ENCODE measurements at regions of chr5 and their contacts with region 1.

Region 1: GRCh38 chr5:91311697-91312501 is 71.2 kb downstream of the ARRDC3 start:
- DNase-seq: peak; percentile 97
- H3K4me3 ChIP-seq: no peak overlapping the region
- H3K27ac ChIP-seq: peak overlapping the region; percentile 100
- H3K4me1 ChIP-seq: peaks cover 33% of the 10 kb centered on the region
- H3K27me3 ChIP-seq: no peaks in the 10 kb centered on the region
- CTCF ChIP-seq: no peak
- POLR2A ChIP-seq: no peak

Region 2: GRCh38 chr5:90968319-90968718 is 343.6 kb before region 1 on chr5:
- CTCF ChIA-PET with region 1: no interaction called
- POLR2A ChIA-PET with region 1: no interaction called
- dilution Hi-C with region 1: no loop called
- intact Hi-C with region 1: loop called (anchors 1 kb)
- DNase-seq: no peak
- H3K4me3 ChIP-seq: no peak overlapping the region
- H3K27ac ChIP-seq: peak overlapping the region; percentile 57
- H3K4me1 ChIP-seq: peaks cover 32% of the 10 kb centered on the region
- H3K27me3 ChIP-seq: no peaks in the 10 kb centered on the region
- CTCF ChIP-seq: no peak
- POLR2A ChIP-seq: no peak

Region 3: GRCh38 chr5:91101600-91102379 is 210.1 kb before region 1 on chr5:
- CTCF ChIA-PET with region 1: no interaction called
- POLR2A ChIA-PET with region 1: no interaction called
- dilution Hi-C with region 1: no loop called
- intact Hi-C with region 1: loop called (anchors 1 kb)
- DNase-seq: peak; percentile 85
- H3K4me3 ChIP-seq: no peak overlapping the region
- H3K27ac ChIP-seq: no peak overlapping the region
- H3K4me1 ChIP-seq: no peaks in the 10 kb centered on the region
- H3K27me3 ChIP-seq: no peaks in the 10 kb centered on the region
- CTCF ChIP-seq: peak; percentile 67 to 70
- POLR2A ChIP-seq: no peak

Region 4: DNA sequence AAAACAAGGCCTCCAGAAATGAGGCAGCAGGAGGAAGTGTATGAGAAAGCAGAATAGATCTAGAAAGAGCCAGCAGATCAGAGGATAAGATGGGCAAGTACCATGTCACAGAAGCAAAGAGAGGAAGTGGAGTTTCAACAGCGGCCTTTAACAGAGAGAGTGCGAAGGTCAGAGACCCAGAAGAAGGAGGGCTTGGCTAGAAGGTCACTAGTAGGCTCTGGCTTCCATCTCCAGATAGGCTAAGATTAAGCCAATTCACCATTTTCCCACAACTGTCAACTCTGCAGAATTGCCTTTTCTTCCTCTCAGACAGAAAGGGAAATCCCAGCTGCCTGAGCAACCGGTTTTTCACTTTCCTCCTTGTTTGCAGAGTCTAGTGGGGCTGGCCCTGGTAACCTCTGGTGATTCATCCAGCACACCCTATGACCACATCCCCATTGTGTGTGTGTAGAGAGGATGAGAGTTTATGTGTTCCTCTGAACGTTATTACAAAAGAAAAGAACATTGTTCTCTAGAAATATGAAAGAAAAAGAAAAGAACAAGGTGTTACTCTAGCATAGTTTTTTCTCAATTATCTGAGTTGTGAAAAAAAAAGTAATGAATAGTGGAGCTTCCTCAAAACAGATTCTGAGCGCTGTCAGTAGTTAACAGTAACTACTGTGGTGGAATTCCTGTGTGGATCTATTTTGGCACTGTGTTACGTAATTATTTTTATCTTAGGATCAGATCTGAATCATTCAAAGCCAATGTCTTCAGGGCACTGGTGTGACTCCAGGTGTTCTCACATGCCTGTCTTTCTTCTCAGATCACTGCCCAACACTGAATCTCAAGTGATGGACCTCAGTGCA is 149.1 kb before region 1 on chr5:
- CTCF ChIA-PET with region 1: no interaction called
- POLR2A ChIA-PET with region 1: no interaction called
- dilution Hi-C with region 1: no loop called
- intact Hi-C with region 1: loop called (anchors 1 kb)
- DNase-seq: peak; percentile 98
- H3K4me3 ChIP-seq: no peak overlapping the region
- H3K27ac ChIP-seq: peak overlapping the region; percentile 84
- H3K4me1 ChIP-seq: peaks cover 42% of the 10 kb centered on the region
- H3K27me3 ChIP-seq: no peaks in the 10 kb centered on the region
- CTCF ChIP-seq: no peak
- POLR2A ChIP-seq: no peak

Region 5: GRCh38 chr5:91225848-91226686 is 85.8 kb before region 1 on chr5:
- CTCF ChIA-PET with region 1: no interaction called
- POLR2A ChIA-PET with region 1: no interaction called
- dilution Hi-C with region 1: no loop called
- intact Hi-C with region 1: loop called (anchors 2 kb)
- DNase-seq: no peak
- H3K4me3 ChIP-seq: no peak overlapping the region
- H3K27ac ChIP-seq: no peak overlapping the region
- H3K4me1 ChIP-seq: no peaks in the 10 kb centered on the region
- H3K27me3 ChIP-seq: no peaks in the 10 kb centered on the region
- CTCF ChIP-seq: peak in 1 of 2 donors; percentile 14
- POLR2A ChIP-seq: no peak

Region 6: GRCh38 chr5:91266184-91266705 is 45.7 kb before region 1 on chr5:
- CTCF ChIA-PET with region 1: no interaction called
- POLR2A ChIA-PET with region 1: no interaction called
- dilution Hi-C with region 1: no loop called
- intact Hi-C with region 1: loop called (anchors 1 kb)
- DNase-seq: peak; percentile 77
- H3K4me3 ChIP-seq: no peak overlapping the region
- H3K27ac ChIP-seq: peak overlapping the region; percentile 11
- H3K4me1 ChIP-seq: peaks cover 10% of the 10 kb centered on the region
- H3K27me3 ChIP-seq: no peaks in the 10 kb centered on the region
- CTCF ChIP-seq: no peak
- POLR2A ChIP-seq: no peak

Region 7: DNA sequence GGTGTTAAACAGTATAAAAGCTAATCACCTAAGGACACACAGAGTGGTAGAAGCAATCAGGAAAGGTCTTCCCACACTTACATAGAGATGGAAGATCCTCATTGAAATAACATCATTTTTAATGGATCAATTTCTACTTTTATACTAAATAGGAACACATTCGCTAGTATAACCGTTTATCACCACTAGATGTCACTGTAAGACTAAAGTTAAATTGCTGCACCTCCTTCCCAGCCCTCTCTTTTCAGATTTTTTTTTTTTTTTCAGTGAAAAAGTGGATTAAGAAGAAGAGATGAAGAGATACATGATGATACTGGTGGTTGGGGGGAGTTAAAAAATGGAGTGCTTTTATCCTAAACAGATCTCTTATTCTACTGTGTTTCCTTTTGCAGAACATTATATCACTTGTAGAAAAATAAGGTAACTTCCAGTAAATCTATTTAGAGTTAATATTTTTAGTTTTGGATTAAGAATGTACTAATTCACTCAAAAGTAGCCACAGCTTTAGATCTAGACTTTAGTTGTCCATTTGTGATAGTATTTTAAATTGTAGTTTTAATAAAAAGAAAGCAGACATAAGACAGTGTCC is 188.1 kb after region 1 on chr5:
- CTCF ChIA-PET with region 1: no interaction called
- POLR2A ChIA-PET with region 1: no interaction called
- dilution Hi-C with region 1: no loop called
- intact Hi-C with region 1: no loop called
- DNase-seq: peak; percentile 54
- H3K4me3 ChIP-seq: no peak overlapping the region
- H3K27ac ChIP-seq: no peak overlapping the region
- H3K4me1 ChIP-seq: no peaks in the 10 kb centered on the region
- H3K27me3 ChIP-seq: peaks cover 0 to 5% of the 10 kb centered on the region in 2 experiments
- CTCF ChIP-seq: peak; percentile 28 to 30
- POLR2A ChIP-seq: no peak

Region 8: GRCh38 chr5:91651703-91652102 is 339.8 kb after region 1 on chr5:
- CTCF ChIA-PET with region 1: no interaction called
- POLR2A ChIA-PET with region 1: no interaction called
- dilution Hi-C with region 1: no loop called
- intact Hi-C with region 1: no loop called
- DNase-seq: no peak
- H3K4me3 ChIP-seq: no peak overlapping the region
- H3K27ac ChIP-seq: no peak overlapping the region
- H3K4me1 ChIP-seq: no peaks in the 10 kb centered on the region
- H3K27me3 ChIP-seq: no peaks in the 10 kb centered on the region
- CTCF ChIP-seq: no peak
- POLR2A ChIP-seq: no peak

Measured in endothelial cell of umbilical vein (primary cell).